GM12878 (cell line): ENCODE measurements at regions of chr5 and their contacts with region 1.

Region 1: GRCh38 chr5:157718519-157718918 is 12.7 kb upstream of the THG1L start:
- DNase-seq: peak; percentile 28
- ATAC-seq: peak; percentile 98
- H3K4me3 ChIP-seq: no peak overlapping the region
- H3K27ac ChIP-seq: no peak overlapping the region
- H3K4me1 ChIP-seq: peaks cover 4% of the 10 kb centered on the region
- H3K27me3 ChIP-seq: no peaks in the 10 kb centered on the region
- CTCF ChIP-seq: peak; percentile 54 to 71 (median 57); a peak in 5 of 6 replicates
- EP300 ChIP-seq: no peak
- POLR2A ChIP-seq: no peak
- RAD21 ChIP-seq: peak; percentile 86

Region 2: DNA sequence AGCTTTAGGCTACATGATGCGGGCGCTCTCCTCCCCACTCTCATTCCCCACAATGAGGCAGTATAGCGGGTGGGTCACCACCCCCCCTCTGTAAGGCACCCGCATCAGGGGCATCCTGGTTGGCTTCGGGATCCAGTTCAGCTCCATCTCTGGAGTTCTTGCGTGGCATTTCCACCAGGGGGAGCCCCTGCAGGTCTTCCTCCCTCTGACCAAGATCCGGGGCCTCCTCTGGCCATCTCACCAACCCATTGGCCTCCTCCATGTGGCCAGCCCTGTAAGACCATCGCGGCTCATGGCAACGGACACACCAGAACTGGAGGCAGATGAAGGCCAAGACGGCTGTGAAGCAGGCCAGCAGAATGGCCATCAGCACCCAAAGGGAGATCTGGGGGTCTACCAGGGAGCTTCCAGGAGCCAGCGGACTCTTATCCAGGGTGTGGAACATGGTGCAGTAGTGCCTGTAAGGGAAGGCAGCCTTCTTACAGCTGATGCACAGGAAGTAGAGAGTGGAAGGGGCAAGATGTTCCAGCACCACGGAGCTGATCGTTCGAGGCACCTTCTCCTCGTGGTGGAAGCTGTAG is 375.6 kb before region 1 on chr5:
- CTCF ChIA-PET with region 1: interaction called, 11 read pairs
- POLR2A ChIA-PET with region 1: no interaction called
- RAD21 ChIA-PET with region 1: no interaction called
- SMC1A ChIA-PET with region 1: interaction called, 4 read pairs
- in situ Hi-C with region 1: no loop called
- intact Hi-C with region 1: no loop called
- DNase-seq: no peak
- ATAC-seq: peak; percentile 81
- H3K4me3 ChIP-seq: no peak overlapping the region
- H3K27ac ChIP-seq: no peak overlapping the region
- H3K4me1 ChIP-seq: no peaks in the 10 kb centered on the region
- H3K27me3 ChIP-seq: no peaks in the 10 kb centered on the region
- CTCF ChIP-seq: peak; percentile 46 to 68 (median 51)
- EP300 ChIP-seq: no peak
- POLR2A ChIP-seq: no peak
- RAD21 ChIP-seq: peak; percentile 15; the same call in 1 of the 2 replicates

Region 3: DNA sequence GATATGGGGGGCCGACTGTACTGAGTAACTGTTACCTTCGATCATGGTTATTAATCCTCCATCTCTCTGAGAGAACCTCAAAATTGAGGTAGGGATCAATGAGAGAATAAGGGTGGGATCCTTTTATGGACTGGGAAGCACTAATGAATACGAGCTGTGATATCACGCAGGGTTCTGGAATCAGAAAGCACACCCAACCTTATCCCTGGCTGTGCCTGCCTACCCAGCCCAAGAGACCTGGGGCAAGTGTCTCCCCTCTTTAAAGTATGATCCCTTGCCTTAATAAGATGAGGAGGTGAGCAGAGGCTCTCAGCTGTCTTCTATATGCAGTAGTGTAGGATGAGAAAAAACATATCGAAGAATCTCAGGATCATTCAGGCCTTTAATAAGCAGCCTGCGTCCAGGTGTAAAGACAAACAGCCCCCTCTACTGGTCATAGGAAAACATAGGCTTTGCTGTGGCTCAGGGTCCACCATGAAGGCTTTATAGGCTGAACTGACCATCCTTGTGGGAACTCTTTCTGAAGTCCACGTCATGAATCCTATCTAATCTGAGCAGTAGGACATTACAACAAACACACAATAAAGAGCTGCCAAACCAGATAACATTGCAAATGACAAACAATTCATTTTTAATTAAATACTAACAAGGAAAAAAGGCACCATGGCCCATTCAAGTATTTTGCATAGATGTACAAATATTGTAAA is 241.7 kb before region 1 on chr5:
- CTCF ChIA-PET with region 1: interaction called, 57 read pairs
- POLR2A ChIA-PET with region 1: no interaction called
- RAD21 ChIA-PET with region 1: interaction called, 21 read pairs
- SMC1A ChIA-PET with region 1: interaction called, 14 read pairs
- in situ Hi-C with region 1: no loop called
- intact Hi-C with region 1: loop called (anchors 5 kb)
- DNase-seq: no peak
- ATAC-seq: peak; percentile 85
- H3K4me3 ChIP-seq: no peak overlapping the region
- H3K27ac ChIP-seq: no peak overlapping the region
- H3K4me1 ChIP-seq: no peaks in the 10 kb centered on the region
- H3K27me3 ChIP-seq: no peaks in the 10 kb centered on the region
- CTCF ChIP-seq: peak; percentile 74 to 77 (median 77)
- EP300 ChIP-seq: no peak
- POLR2A ChIP-seq: no peak
- RAD21 ChIP-seq: peak; percentile 89

Region 4: DNA sequence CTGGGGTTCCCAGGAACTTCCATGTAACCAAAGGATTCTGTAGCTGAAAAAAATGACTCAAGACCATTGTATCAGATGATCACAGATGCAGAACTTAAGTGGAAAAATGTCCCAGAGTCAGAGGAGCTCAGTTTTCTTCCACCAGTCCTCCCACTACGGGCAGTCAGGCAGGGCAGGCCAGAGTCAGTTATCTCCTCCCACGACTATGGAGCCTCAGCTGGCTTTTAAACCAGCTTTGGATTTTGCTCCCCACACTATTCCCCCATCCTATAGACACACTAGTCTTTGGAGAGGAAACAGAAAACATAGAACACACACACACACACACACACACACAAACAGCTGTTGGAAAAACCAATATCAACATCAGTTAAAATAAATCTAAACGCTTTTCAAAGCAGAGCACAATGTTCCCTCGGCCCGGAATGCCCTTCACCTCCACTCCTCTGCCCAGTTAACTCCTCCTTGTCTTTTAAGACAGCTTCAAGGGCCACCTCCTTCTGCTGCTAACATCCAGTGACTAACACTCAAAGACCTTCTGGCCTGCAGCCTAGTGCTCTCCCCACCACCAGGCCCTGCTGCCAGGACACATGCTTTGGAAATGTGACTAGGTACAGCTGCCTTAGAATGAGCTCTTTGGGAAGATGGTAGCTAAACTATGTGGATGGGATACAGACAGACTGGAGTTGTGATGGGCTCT is 201.7 kb before region 1 on chr5:
- CTCF ChIA-PET with region 1: interaction called, 3 read pairs
- POLR2A ChIA-PET with region 1: no interaction called
- RAD21 ChIA-PET with region 1: interaction called, 14 read pairs
- SMC1A ChIA-PET with region 1: interaction called, 6 read pairs
- in situ Hi-C with region 1: no loop called
- intact Hi-C with region 1: no loop called
- DNase-seq: no peak
- ATAC-seq: no peak
- H3K4me3 ChIP-seq: no peak overlapping the region
- H3K27ac ChIP-seq: no peak overlapping the region
- H3K4me1 ChIP-seq: peaks cover 29% of the 10 kb centered on the region
- H3K27me3 ChIP-seq: no peaks in the 10 kb centered on the region
- CTCF ChIP-seq: no peak
- EP300 ChIP-seq: no peak
- POLR2A ChIP-seq: no peak
- RAD21 ChIP-seq: no peak

Region 5: GRCh38 chr5:157596487-157596886 is 122.0 kb before region 1 on chr5:
- CTCF ChIA-PET with region 1: interaction called, 14 read pairs
- POLR2A ChIA-PET with region 1: interaction called, 3 read pairs
- RAD21 ChIA-PET with region 1: interaction called, 4 read pairs
- SMC1A ChIA-PET with region 1: interaction called, 9 read pairs
- in situ Hi-C with region 1: no loop called
- intact Hi-C with region 1: no loop called
- DNase-seq: peak; percentile 96
- ATAC-seq: peak; percentile 73
- H3K4me3 ChIP-seq: no peak overlapping the region
- H3K27ac ChIP-seq: peak overlapping the region; percentile 79
- H3K4me1 ChIP-seq: peaks cover 88% of the 10 kb centered on the region
- H3K27me3 ChIP-seq: no peaks in the 10 kb centered on the region
- CTCF ChIP-seq: no peak
- EP300 ChIP-seq: peak; percentile 79 to 81
- POLR2A ChIP-seq: no peak
- RAD21 ChIP-seq: no peak

Region 6: DNA sequence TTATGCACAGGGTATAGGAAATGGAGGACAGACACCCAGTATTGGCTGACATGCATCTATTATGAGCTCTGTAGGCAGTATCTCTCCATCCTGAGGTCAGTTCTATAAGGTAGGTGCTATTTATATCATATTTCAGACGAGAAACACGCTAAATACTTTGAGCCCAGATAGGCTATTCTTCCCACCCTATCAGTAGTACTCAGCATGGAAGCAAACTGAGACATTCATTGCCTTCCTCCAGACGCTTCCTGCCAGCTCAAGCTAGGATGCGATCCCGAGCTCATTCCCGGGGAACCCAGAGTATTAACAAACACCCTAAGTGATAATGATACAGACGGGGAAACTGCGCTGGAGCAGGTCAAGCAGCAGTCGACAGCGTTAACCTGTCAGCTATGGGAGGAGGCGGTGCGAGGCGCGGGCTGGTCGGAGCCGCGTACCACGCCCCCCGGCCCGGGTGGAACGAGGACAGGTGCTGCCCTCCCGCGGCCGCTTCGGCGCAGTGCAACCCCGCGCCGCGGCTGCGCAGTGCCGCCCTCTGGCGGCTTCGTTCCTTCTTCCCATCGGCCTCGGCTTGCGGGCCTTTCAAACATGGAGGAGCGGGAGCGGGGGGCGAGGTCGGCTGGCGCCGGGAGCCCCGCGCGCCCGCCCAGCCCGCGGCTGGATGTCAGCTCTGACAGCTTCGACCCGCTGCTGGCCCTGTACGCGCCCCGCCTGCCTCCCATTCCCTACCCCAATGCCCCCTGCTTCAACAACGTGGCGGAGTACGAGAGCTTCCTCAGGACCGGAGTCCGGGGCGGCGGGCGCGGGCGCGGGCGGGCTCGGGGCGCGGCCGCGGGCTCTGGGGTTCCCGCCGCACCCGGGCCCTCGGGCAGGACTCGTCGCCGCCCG is 24.9 kb after region 1 on chr5 and contains the start of gene LSM11:
- CTCF ChIA-PET with region 1: interaction called, 76 read pairs
- POLR2A ChIA-PET with region 1: no interaction called
- RAD21 ChIA-PET with region 1: interaction called, 31 read pairs
- SMC1A ChIA-PET with region 1: interaction called, 15 read pairs
- in situ Hi-C with region 1: no loop called
- intact Hi-C with region 1: no loop called
- DNase-seq: peak; percentile 56
- ATAC-seq: peak; percentile 93
- H3K4me3 ChIP-seq: peak within 1 kb of the TSS; percentile 85
- H3K27ac ChIP-seq: peak within 1 kb of the TSS; percentile 45; the same call in 1 of the 2 replicates
- H3K4me1 ChIP-seq: peaks cover 12% of the 10 kb centered on the region; the same call in 1 of the 2 replicates
- H3K27me3 ChIP-seq: no peaks in the 10 kb centered on the region
- CTCF ChIP-seq: peak; percentile 97 to 100 (median 99); a peak in 5 of 6 replicates
- EP300 ChIP-seq: no peak
- POLR2A ChIP-seq: peak; percentile 64
- RAD21 ChIP-seq: peak; percentile 87
- polyA plus RNA-seq, gene LSM11: 1.5 to 2.1 TPM